ENCODE measurements at regions of chr15 and their contacts with region 1.

Region 1: DNA sequence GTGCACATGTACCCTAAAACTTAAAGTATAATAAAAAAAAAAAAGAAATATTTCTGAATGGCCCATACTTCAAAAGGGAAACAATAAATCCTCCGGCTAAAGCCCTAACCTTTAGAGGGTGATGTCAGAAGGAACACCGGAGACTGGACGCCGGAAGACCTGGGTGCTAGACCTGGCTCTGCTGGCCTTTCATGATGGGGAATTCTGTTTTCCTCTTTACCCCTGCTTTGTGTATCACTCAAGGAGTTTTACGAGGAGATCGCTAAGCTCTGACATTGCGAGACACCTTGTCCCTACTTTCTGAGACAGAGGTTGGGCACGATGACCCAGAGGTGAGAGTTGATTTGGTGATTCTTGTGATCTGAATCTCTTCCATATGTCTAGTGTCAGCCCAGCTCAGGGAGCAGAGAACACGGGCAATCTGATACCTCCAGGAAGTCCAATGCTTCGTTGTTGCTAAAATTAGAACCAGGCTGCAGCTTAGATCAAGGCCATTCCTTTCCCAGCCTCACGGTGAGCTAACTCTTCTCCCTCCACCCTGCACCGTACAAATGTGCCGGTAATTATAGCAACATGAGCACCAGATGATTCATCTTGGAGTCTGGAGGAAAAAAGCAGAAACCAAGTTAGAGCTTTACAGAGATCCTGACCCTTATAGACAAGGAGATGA is 42.0 kb upstream of the CFAP161 start:
- DNase-seq: peak; percentile 61

Region 2: DNA sequence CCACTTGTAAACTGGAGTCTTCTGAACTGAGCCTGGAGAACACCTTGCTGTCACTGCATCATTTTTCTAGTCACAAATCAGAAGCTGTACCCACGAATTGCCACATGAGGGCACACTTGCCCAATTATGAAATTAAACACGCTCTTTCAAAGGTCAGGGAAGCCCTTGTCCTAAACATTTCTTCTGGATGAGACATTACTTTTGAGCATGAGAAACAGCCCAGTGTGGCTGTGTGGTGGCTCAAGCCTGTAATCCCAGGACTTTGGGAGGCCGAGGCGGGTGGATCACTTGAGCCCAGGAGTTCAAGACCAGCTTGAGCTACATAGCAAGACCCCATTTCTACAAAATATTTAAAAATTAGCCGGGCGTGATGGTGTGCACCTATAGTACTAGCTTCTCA is 14.5 kb after region 1 on chr15:
- CTCF ChIA-PET with region 1: interaction called, 27 read pairs
- POLR2A ChIA-PET with region 1: no interaction called
- DNase-seq: peak; percentile 71